Ovary (tissue), 10 donors: ENCODE measurements at regions of chr16 and their contacts with region 1.

Region 1: GRCh38 chr16:2874912-2875362 is 8.1 kb upstream of the FLYWCH2 start:
- DNase-seq: peak; percentile 66 to 86 (median 80)
- H3K4me3 ChIP-seq: no peak overlapping the region
- H3K27ac ChIP-seq: no peak overlapping the region
- H3K4me1 ChIP-seq: peaks cover 2% of the 10 kb centered on the region
- H3K27me3 ChIP-seq: no peaks in the 10 kb centered on the region
- CTCF ChIP-seq: peak; percentile 92 to 97 (median 95)
- EP300 ChIP-seq: no peak
- POLR2A ChIP-seq: no peak

Region 2: DNA sequence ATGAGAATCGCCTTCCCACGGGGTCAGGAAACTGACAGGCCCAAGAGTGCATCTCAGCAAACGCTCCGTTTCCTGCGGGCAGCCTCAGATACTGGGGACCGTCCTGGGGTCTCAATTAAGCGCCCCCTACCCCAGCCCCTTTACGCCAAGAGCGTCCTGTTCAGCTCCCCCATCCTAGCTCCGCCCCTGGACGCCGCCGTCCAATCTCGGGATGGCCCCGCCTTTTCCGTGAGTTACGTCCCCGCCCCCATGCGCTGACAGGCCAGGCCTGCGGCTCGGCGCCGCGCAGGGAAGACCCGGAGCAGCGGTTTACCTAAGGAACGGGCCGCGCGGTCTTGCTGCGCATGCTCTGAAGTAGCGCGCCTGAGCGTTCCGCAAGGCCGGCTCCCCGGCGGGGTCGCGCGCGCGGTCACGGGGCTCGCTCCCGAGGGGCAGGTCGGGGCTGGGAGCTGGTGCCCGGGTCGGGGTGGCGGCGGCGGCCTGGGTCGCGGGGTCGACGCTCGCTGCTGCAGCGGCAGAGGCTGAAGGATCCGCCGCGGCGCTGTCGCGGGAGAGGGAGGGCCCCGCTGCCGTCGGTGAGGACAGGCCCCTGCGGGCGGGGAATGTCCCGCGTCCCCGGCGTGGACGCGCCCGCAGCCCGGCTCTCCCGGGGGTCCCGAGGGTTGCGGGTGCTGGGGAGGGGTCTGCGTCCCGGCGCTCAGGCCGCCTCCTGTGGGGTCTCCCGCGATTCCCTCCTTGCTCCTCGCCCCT is 36.8 kb after region 1 on chr16 and contains the start of gene FLYWCH1:
- intact Hi-C with region 1: loop called in 3 of 4 experiments (anchors 5 kb)
- DNase-seq: peak; percentile 98 to 99 (median 99)
- H3K4me3 ChIP-seq: peak within 1 kb of the TSS; percentile 92
- H3K27ac ChIP-seq: peak within 1 kb of the TSS; percentile 55 to 74
- H3K4me1 ChIP-seq: peaks cover 5% of the 10 kb centered on the region
- H3K27me3 ChIP-seq: no peaks in the 10 kb centered on the region
- CTCF ChIP-seq: peak in 2 of 3 donors; percentile 20 to 25
- EP300 ChIP-seq: no peak
- POLR2A ChIP-seq: peak; percentile 75
- total RNA-seq, gene FLYWCH1: 31.4 to 66.9 (median 55.3) TPM

Region 3: GRCh38 chr16:2919511-2920255 is 44.7 kb after region 1 on chr16:
- intact Hi-C with region 1: loop called (anchors 2 to 5 kb)
- DNase-seq: peak; percentile 55 to 81 (median 69)
- H3K4me3 ChIP-seq: no peak overlapping the region
- H3K27ac ChIP-seq: peak overlapping the region in 1 of 2 donors; percentile 61
- H3K4me1 ChIP-seq: peaks cover 2% of the 10 kb centered on the region
- H3K27me3 ChIP-seq: no peaks in the 10 kb centered on the region
- CTCF ChIP-seq: peak; percentile 90 to 96 (median 90)
- EP300 ChIP-seq: no peak
- POLR2A ChIP-seq: no peak

Region 4: GRCh38 chr16:2926650-2927646 is 52.0 kb after region 1 on chr16:
- intact Hi-C with region 1: loop called in 1 of 4 experiments (anchors 5 kb)
- DNase-seq: peak; percentile 71 to 89 (median 84)
- H3K4me3 ChIP-seq: no peak overlapping the region
- H3K27ac ChIP-seq: no peak overlapping the region
- H3K4me1 ChIP-seq: peaks cover 1% of the 10 kb centered on the region
- H3K27me3 ChIP-seq: no peaks in the 10 kb centered on the region
- CTCF ChIP-seq: peak; percentile 74 to 91 (median 89)
- EP300 ChIP-seq: no peak
- POLR2A ChIP-seq: no peak